ENCODE measurements at regions of chr11 and their contacts with region 1.

Region 1: DNA sequence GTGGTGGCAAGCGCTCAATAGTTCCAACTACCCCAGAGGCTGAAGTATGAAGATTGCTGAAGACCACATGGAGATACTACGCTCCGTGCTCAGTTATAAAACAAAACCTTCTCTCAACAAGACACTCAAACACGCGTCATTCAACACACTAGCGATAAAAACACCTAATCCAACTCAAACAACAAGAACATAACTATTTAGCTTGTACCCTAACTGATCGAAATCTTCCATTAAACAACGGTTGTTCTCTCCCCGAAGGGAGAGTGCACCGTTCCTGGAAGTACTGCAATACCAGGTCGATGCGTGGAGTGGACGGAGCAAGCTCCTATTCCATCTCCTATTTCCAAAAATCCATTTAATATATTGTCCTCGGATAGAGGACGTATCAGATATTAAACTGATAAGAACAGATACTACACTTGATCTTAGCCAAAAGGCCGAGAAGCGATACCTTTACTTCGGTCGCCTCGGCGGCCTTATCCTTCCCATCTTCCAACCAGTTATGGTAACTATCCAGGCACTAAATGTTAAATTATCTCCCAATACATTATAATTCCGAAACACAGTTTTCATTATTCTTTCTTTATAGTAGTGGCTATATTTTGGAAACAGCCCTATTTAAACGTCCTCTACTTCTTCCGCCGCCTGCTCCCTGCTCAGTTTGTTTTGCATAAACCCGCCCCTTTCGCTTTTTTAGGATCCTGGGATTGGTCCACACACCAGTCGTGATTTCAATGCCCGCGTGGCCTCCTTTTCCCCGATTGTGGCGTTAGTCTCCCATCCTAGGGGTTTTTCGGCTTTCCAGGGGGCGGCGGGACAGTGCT is 2.2 kb upstream of the WDR74 start:
- DNase-seq: peak; percentile 79
- ATAC-seq: peak; percentile 72
- H3K4me3 Mint-ChIP-seq: no peak overlapping the region
- H3K27ac Mint-ChIP-seq: no peak overlapping the region
- H3K4me1 Mint-ChIP-seq: peaks cover 28% of the 10 kb centered on the region
- H3K27me3 Mint-ChIP-seq: no peaks in the 10 kb centered on the region
- CTCF ChIP-seq: no peak

Region 2: GRCh38 chr11:61851113-61851899 is 990.3 kb before region 1 on chr11:
- CTCF ChIA-PET with region 1: no interaction called
- POLR2A ChIA-PET with region 1: no interaction called
- intact Hi-C with region 1: no loop called
- DNase-seq: no peak
- ATAC-seq: no peak
- H3K4me3 Mint-ChIP-seq: no peak overlapping the region
- H3K27ac Mint-ChIP-seq: no peak overlapping the region
- H3K4me1 Mint-ChIP-seq: no peaks in the 10 kb centered on the region
- H3K27me3 Mint-ChIP-seq: no peaks in the 10 kb centered on the region
- CTCF ChIP-seq: no peak

Region 3: GRCh38 chr11:62601394-62602140 is 240.0 kb before region 1 on chr11 and contains the start of gene MTA2:
- CTCF ChIA-PET with region 1: no interaction called
- POLR2A ChIA-PET with region 1: interaction called, 46 read pairs
- intact Hi-C with region 1: no loop called
- DNase-seq: peak; percentile 100
- ATAC-seq: peak; percentile 81
- H3K4me3 Mint-ChIP-seq: peak within 1 kb of the TSS; percentile 92
- H3K27ac Mint-ChIP-seq: peak within 1 kb of the TSS; percentile 97
- H3K4me1 Mint-ChIP-seq: peaks cover 45% of the 10 kb centered on the region
- H3K27me3 Mint-ChIP-seq: no peaks in the 10 kb centered on the region
- CTCF ChIP-seq: no peak
- total RNA-seq, gene MTA2: 170 and 175 TPM in 2 replicates

Region 4: GRCh38 chr11:62652161-62653006 is 189.2 kb before region 1 on chr11:
- CTCF ChIA-PET with region 1: no interaction called
- POLR2A ChIA-PET with region 1: interaction called, 25 read pairs
- intact Hi-C with region 1: no loop called
- DNase-seq: no peak
- ATAC-seq: no peak
- H3K4me3 Mint-ChIP-seq: peak overlapping the region; percentile 90
- H3K27ac Mint-ChIP-seq: peak overlapping the region; percentile 90
- H3K4me1 Mint-ChIP-seq: peaks cover 28% of the 10 kb centered on the region
- H3K27me3 Mint-ChIP-seq: no peaks in the 10 kb centered on the region
- CTCF ChIP-seq: no peak

Region 5: DNA sequence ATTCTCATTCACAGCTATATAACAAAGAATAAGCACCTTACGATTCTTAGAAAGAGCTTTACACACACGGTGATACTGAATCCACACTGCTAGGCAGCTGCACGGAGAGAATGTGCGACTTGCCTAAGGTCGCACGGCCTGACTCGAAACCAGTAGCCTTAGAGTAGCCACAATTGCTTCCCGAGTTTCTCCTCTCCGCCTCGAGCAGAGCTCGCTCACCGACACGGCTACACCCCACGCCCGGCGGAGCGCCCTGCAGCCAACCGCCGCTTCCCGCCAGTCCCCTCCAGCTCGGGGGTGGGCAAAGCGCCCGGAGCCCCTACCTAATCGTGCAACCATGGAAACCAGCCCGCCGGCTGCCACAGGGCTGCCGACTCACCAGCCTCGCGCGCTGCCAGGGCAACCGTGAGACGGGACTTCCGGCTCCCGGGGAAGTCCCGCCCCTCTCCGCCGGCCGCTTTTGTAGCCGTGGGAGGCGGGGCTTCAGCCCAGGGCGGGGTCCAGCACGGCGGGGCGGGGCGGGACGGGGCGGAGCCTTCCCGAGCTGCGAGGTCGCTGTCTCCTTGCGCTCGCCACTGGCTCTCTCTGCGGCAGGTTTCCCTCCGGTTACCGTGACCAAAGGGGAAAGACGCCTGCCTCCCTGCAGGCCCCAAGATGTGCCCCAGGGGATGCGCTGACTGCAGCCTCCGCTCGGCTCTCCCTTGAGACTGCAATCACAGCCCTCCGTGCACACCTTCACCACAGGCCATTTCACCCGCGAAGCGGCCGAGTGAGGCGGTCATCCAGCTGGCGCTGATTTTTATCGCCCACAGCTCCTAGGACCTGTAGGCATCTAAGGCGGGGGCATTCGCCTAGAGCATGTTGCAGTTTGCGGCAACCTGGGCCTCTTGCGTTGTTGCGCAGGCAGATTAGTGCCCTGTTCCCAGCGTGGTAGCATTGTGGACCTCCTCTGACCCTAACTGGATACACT is 135.4 kb before region 1 on chr11:
- CTCF ChIA-PET with region 1: no interaction called
- POLR2A ChIA-PET with region 1: interaction called, 110 read pairs
- intact Hi-C with region 1: loop called (anchors 1 kb)
- DNase-seq: peak; percentile 90
- ATAC-seq: peak; percentile 73
- H3K4me3 Mint-ChIP-seq: peak overlapping the region; percentile 92
- H3K27ac Mint-ChIP-seq: peak overlapping the region; percentile 99
- H3K4me1 Mint-ChIP-seq: peaks cover 49% of the 10 kb centered on the region
- H3K27me3 Mint-ChIP-seq: no peaks in the 10 kb centered on the region
- CTCF ChIP-seq: no peak

Region 6: DNA sequence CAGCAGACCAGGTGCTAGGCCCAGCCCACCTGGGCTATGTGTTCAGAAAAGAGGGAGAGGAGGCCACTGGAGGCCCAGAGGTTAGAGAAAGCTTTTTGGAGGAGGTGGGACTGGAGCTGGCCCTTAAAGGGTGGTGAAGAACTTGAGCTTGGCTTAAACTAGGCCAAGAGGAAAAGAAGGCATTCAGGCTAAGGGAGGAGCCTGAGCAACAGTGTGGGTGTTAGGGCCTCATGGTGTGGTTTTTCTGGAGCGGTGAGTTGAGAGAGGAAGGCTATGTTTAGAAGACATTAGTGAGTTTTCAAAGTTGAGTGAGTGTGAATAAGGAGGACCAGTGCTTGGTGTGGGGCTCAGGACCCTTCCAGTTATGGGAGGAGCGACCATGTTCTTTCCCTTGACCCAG is 64.2 kb before region 1 on chr11:
- CTCF ChIA-PET with region 1: no interaction called
- POLR2A ChIA-PET with region 1: interaction called, 56 read pairs
- intact Hi-C with region 1: no loop called
- DNase-seq: no peak
- ATAC-seq: no peak
- H3K4me3 Mint-ChIP-seq: no peak overlapping the region
- H3K27ac Mint-ChIP-seq: no peak overlapping the region
- H3K4me1 Mint-ChIP-seq: peaks cover 3% of the 10 kb centered on the region
- H3K27me3 Mint-ChIP-seq: no peaks in the 10 kb centered on the region
- CTCF ChIP-seq: no peak

Region 7: DNA sequence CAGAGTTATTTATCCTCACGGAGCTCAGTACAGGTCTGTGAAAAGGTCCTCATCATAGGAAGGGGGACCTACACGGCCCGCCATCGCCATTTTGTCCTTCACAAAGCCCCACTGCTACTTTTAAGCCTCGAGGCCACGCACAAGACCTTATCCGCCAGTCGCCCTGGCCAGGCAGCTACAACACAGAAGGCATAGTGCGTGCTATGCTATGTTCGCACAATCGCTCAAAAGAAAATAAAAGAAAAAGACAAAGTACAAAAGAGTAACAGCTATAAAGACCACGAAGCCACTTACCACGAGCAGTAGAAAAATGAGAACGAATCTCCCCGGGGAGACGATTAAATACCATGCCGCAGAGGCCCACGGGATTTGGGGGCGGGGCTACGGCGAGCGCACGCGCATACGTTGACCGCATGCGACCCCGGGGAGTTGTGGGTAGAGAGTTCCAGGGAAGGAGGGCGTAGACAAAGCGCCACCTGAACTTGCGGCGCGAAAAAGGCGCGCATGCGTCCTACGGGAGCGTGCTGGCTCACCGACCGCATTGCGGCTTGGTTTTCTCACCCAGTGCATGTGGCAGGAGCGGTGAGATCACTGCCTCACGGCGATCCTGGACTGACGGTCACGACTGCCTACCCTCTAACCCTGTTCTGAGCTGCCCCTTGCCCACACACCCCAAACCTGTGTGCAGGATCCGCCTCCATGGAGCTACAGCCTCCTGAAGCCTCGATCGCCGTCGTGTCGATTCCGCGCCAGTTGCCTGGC is 14.2 kb after region 1 on chr11:
- CTCF ChIA-PET with region 1: interaction called, 3 read pairs
- POLR2A ChIA-PET with region 1: interaction called, 597 read pairs
- intact Hi-C with region 1: loop called (anchors 1 kb)
- DNase-seq: peak; percentile 99
- ATAC-seq: peak; percentile 89
- H3K4me3 Mint-ChIP-seq: peak overlapping the region; percentile 99
- H3K27ac Mint-ChIP-seq: peak overlapping the region; percentile 96
- H3K4me1 Mint-ChIP-seq: peaks cover 61% of the 10 kb centered on the region
- H3K27me3 Mint-ChIP-seq: no peaks in the 10 kb centered on the region
- CTCF ChIP-seq: no peak

Region 8: DNA sequence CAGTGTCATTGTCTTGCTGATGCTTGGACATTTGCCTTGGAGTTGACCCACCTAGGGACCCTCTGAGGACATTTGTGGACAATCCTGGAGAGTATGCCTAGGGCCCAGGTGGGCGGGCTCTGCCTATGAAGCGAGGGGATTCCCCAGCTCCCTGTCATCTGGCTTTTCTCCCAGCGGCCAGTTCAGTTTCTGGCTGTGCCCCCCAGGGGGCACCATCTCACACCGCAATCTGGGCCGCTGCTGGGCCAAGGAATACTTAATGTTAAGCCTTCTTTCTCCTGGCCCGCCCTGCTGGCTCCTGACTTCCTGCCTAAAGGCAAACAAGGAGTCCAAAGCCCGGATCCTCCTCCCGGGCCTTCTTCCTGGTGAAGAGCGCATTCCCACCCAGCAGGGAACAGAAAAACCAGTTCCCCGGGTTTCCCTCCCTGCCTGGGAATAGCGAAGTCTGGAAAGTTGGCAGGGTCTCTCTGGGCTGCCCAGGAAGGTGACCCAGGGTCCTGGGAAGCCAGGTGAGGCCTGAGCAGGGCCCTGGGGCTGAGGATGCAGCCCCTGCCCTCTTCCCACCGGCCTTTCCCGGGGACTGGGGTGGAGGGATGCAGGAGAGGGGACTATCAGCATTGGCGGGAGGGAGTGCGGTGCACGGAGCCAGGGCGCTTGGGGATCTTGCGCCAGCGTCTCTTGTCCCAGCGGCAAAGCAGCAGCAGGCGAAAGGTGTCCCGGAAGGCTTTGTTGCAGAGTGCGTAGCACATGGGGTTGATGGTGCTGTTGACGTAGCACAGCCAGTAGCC is 67.7 kb after region 1 on chr11:
- CTCF ChIA-PET with region 1: no interaction called
- POLR2A ChIA-PET with region 1: no interaction called
- intact Hi-C with region 1: no loop called
- DNase-seq: no peak
- ATAC-seq: peak; percentile 47
- H3K4me3 Mint-ChIP-seq: no peak overlapping the region
- H3K27ac Mint-ChIP-seq: no peak overlapping the region
- H3K4me1 Mint-ChIP-seq: no peaks in the 10 kb centered on the region
- H3K27me3 Mint-ChIP-seq: peaks cover 30% of the 10 kb centered on the region
- CTCF ChIP-seq: no peak

Measured in activated B cell treated with CpG ODN at 0.5 μM for 24 hours (primary cell).